ENCODE measurements at regions of chr20 and their contacts with region 1.

Region 1: DNA sequence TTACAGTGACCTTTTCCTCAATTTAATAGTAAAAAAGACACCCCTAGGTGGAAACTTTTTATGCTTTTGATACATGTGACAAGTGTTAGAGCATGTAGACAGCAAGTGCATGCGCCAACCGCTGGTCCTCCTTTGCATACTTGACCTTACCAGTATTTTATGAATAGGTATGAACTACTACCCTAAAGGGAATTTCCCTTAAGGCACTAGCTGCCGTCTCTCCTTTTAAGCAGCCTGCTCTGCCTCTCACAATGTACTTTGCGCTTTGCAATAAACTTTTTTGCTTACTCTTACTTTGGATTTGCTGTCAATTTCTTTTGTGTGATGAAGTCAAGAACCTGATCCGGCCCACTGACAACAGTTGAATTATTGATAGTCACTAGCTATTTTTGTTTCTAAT is 50.6 kb upstream of the ZNF133 start:
- DNase-seq: no peak
- H3K4me3 ChIP-seq: no peak overlapping the region
- H3K27ac ChIP-seq: no peak overlapping the region
- H3K4me1 ChIP-seq: no peaks in the 10 kb centered on the region
- H3K27me3 ChIP-seq: no peaks in the 10 kb centered on the region
- CTCF ChIP-seq: no peak
- EP300 ChIP-seq: no peak
- POLR2A ChIP-seq: no peak

Region 2: GRCh38 chr20:18188434-18188833 is 49.2 kb before region 1 on chr20:
- intact Hi-C with region 1: loop called in 1 of 4 experiments (anchors 2 kb)
- DNase-seq: no peak
- H3K4me3 ChIP-seq: no peak overlapping the region
- H3K27ac ChIP-seq: no peak overlapping the region
- H3K4me1 ChIP-seq: no peaks in the 10 kb centered on the region
- H3K27me3 ChIP-seq: no peaks in the 10 kb centered on the region
- CTCF ChIP-seq: no peak
- EP300 ChIP-seq: no peak
- POLR2A ChIP-seq: no peak

Region 3: DNA sequence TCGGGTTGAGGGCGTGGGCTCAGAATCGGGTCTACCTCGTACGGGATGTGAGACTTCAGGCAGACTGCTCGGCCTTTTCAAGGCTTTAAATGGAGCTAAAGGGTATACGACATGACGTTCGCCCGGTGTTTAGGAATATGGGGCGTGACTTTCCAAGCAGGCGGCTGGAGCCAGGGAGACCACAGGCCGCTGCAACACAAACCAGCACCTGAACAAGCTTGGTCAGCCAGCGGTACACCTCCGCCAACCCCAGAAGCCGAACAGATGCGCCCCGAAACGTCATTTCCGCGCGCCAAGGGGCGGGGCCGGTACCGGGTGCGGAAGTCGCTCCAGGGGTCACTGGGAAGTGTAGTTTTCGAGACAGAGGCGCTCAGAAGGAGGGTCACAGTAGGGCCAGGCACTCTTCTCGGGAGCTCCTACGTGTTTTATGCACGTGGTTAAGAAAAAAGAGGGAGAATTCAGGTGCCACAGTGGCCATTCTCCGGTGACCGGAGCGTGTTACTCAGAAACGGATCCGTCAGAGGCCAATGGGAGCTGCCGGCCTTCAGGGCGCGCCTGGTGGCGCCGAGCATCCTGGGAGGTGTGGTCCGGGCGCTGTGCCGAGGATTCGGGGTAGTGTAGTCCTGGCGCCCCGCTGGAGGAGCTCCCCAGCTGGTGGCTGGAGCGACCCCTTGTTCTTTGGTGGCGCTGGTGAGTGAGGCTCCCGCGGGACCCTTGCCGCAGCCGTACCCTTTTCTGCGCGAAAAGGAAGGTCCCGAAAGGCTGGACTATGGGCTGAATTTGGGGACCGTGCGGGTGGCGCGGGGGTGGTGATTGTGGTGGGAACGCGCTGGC is 50.5 kb after region 1 on chr20 and contains the start of gene ZNF133:
- intact Hi-C with region 1: no loop called
- DNase-seq: peak; percentile 95 to 98 (median 96)
- H3K4me3 ChIP-seq: peak within 1 kb of the TSS; percentile 72
- H3K27ac ChIP-seq: peak within 1 kb of the TSS; percentile 66 to 95
- H3K4me1 ChIP-seq: peaks cover 10% of the 10 kb centered on the region
- H3K27me3 ChIP-seq: no peaks in the 10 kb centered on the region
- CTCF ChIP-seq: peak in 1 of 3 donors; percentile 8
- EP300 ChIP-seq: no peak
- POLR2A ChIP-seq: peak; percentile 80
- total RNA-seq, gene ZNF133: 13.4 to 20.0 (median 15.1) TPM

Region 4: DNA sequence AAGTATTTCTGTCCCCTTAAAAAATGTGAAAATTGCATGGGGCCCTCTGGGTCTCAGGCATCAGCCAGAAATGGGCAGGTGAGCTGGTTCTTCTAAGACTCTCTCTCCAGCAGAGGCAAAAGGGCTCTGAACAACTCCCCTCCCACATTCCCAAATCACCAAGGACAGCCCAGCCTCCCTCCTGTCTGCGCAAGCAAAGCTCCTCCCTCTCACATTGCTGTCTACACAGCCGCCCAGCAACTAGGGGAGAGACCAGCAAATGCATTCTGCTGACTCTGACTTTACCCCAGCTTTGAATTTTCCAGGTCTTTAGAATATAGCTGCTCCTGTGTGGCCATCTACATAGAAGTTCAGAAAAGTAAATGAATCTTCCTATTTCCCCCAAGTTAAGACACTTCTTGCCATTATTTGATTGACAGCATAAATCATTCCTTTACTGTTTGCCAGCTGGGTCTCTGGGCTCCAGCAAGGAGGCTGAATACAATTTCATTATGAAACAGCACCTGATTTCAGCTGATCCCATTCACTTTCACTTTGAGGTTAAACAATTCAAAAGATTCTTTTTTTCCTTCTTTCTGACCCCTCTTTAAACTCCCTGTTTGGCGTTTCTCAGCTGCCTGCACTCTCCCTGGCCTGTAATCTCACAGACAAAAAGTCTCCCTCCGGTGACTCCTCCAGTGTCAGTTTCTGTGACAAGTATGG is 1314.6 kb after region 1 on chr20:
- intact Hi-C with region 1: no loop called
- DNase-seq: peak; percentile 69 to 74 (median 72)
- H3K4me3 ChIP-seq: no peak overlapping the region
- H3K27ac ChIP-seq: peak overlapping the region in 1 of 2 donors; percentile 41
- H3K4me1 ChIP-seq: peaks cover 3% of the 10 kb centered on the region
- H3K27me3 ChIP-seq: no peaks in the 10 kb centered on the region
- CTCF ChIP-seq: no peak
- EP300 ChIP-seq: no peak
- POLR2A ChIP-seq: no peak